Activated CD4-positive, alpha-beta T cell treated with anti-CD3 and anti-CD28 coated beads for 36 hours (primary cell): ENCODE measurements at regions of chr11 and their contacts with region 1.

Region 1: DNA sequence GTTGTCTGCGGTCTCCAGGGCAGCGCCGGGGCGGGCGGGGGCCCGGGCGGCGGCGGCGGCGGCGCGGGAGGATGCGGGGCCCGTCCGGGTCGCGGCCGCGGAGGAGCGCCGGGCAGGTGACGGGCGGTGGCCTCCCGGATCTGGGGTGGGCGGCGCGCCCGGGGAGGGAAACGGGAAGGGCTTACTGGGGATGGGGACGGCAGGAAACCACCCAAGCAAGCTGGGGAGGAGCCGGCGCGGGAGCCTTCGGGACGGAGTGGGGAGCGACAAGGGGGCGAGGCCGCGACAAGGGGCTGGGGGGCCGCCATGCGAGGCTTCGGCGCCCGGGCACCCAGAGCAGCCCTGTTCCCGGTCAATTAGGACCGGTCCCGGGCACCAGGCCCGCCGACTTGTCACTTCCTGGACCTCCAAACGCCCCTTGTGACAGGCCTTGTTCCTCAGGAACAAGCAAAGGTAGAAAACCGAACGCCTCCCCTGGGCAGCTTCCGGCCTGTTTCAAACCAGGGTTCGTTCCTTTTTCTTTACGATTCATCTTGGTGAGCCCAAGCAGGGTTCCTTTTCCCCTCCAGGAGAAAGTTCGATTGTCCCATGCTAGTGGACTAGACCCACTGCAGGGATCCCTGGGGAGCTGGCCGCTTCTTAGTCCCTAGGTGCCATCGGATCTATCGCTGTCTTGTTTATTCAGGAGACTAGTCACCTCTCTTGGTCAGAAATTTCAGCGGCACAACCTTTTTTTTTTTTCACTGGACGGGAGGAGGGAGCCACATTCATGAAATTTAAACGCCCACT is 492 bp downstream of the JHY start:
- DNase-seq: no peak
- ATAC-seq: peak; percentile 74
- H3K4me3 Mint-ChIP-seq: peak overlapping the region; percentile 77
- H3K27ac Mint-ChIP-seq: peak overlapping the region; percentile 63
- H3K4me1 Mint-ChIP-seq: peaks cover 34% of the 10 kb centered on the region
- H3K27me3 Mint-ChIP-seq: peaks cover 6% of the 10 kb centered on the region

Region 2: GRCh38 chr11:122981388-122982264 is 98.6 kb after region 1 on chr11 and contains the start of gene BSX:
- CTCF ChIA-PET with region 1: no interaction called
- POLR2A ChIA-PET with region 1: interaction called, 3 read pairs
- intact Hi-C with region 1: loop called in 1 of 2 experiments (anchors 5 kb)
- DNase-seq: peak; percentile 75
- ATAC-seq: peak; percentile 74
- H3K4me3 Mint-ChIP-seq: no peak within 1 kb of the TSS
- H3K27ac Mint-ChIP-seq: no peak within 1 kb of the TSS
- H3K4me1 Mint-ChIP-seq: peaks cover 29% of the 10 kb centered on the region
- H3K27me3 Mint-ChIP-seq: peaks cover 79% of the 10 kb centered on the region
- total RNA-seq, gene BSX: not detected